Dorsolateral prefrontal cortex (tissue), 120 donors: ENCODE measurements at regions of chr19 and their contacts with region 1.

Region 1: GRCh38 chr19:42433503-42434260 is 6.5 kb upstream of the LIPE start:
- DNase-seq: peak; percentile 27 to 90 (median 78)
- H3K4me3 ChIP-seq: no peak overlapping the region
- H3K27ac ChIP-seq: peak overlapping the region in 57 of 59 donors; percentile 25 to 91 (median 77)
- H3K27me3 ChIP-seq: no peaks in the 10 kb centered on the region
- CTCF ChIP-seq: peak; percentile 36 to 93 (median 74)

Region 2: GRCh38 chr19:42396381-42397262 is 37.1 kb before region 1 on chr19:
- intact Hi-C with region 1: loop called in 1 of 2 experiments (anchors 5 kb)
- DNase-seq: peak; percentile 95 to 99 (median 99)
- H3K4me3 ChIP-seq: peak overlapping the region; percentile 46 to 87 (median 71)
- H3K27ac ChIP-seq: peak overlapping the region in 58 of 59 donors; percentile 2 to 94 (median 83)
- H3K27me3 ChIP-seq: peaks cover 0 to under 1% (median 0%) of the 10 kb centered on the region in 45 donors
- CTCF ChIP-seq: peak in 21 of 56 donors; percentile 6 to 54 (median 22)